Common myeloid progenitor, CD34-positive (primary cell): ENCODE measurements at regions of chr9 and their contacts with region 1.

Region 1: DNA sequence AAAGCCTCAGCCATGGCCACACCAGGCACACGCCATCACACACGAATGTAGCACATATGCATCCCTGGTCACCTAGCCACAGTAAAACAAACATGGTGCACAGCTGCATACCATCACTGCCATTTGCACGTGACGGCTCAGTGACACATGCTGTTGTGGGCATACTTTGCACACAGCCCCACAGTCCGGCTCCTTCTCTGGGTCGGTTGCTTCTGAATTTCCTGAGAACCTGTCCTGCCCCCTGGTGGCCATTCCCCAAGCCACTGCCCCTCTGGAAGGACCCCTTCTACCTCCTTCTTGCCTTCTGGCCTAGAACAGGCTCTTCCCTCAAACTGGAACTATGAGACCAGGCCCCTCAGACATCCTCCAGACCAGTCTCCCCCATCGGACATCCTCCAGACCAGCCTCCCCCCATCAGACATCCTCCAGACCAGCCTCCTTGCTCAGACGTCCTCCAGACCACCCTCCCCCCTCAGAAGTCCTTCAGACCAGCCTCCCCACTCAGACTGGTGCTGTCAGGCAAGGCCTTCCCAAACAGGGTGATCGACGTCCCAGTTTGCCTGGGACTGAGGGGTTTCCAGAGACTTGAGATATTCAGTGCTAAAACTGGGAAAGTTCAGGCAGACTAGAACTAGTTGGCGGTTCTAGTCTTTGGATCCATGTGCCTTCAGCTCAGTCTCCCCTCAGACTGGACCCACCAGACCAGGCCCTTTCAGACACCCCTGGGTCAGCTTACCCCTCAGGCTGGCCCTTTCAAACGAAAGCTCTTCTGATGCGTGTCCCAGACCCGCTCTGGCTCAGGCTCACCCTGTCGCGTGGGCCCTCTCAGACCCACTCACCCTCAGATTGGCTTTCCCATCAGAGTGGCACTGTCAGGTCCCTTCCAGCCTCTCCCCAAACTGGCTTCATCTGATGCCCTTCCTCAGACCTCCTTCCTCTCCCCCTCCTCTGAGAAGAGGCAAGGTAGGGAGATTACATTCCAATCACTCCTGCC is 24.3 kb upstream of the ENHO start:
- DNase-seq: peak; percentile 76 to 87 (median 85)
- H3K4me3 ChIP-seq: no peak overlapping the region
- H3K27ac ChIP-seq: no peak overlapping the region
- H3K4me1 ChIP-seq: no peaks in the 10 kb centered on the region
- H3K27me3 ChIP-seq: peaks cover 0 to 17% (median 4%) of the 10 kb centered on the region in 5 experiments

Region 2: GRCh38 chr9:34437006-34437925 is 109.9 kb before region 1 on chr9:
- CTCF ChIA-PET with region 1: interaction called, 22 read pairs
- POLR2A ChIA-PET with region 1: no interaction called
- DNase-seq: peak; percentile 84 to 93 (median 87)
- H3K4me3 ChIP-seq: no peak overlapping the region
- H3K27ac ChIP-seq: no peak overlapping the region
- H3K4me1 ChIP-seq: peaks cover 0 to 19% (median 13%) of the 10 kb centered on the region in 4 experiments
- H3K27me3 ChIP-seq: no peaks in the 10 kb centered on the region

Region 3: DNA sequence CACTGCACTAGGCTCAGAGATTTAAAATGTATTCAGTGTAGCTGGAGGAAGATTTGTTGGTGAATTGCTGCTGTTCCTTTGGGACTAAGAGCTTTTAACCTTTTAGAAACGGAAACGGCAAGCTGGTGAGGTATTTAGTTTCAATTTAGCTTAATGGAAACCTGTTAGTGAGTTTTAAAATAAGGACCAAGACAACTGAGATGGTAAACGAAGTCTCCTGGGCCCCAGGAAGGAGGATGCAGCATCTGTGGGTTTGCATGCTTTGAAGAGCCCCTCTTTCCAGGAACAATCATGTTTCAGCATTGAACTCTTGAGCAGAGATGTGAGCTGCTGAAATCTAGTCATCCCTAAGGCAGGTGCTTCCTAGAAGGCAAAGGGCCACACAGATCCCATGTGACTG is 72.0 kb before region 1 on chr9:
- CTCF ChIA-PET with region 1: no interaction called
- POLR2A ChIA-PET with region 1: no interaction called
- DNase-seq: no peak
- H3K4me3 ChIP-seq: no peak overlapping the region
- H3K27ac ChIP-seq: no peak overlapping the region
- H3K4me1 ChIP-seq: no peaks in the 10 kb centered on the region
- H3K27me3 ChIP-seq: peaks cover 0 to 13% (median 8%) of the 10 kb centered on the region in 5 experiments

Region 4: GRCh38 chr9:34522971-34523797 is 23.9 kb before region 1 on chr9 and contains the start of gene ENHO:
- CTCF ChIA-PET with region 1: interaction called, 15 read pairs
- POLR2A ChIA-PET with region 1: no interaction called
- DNase-seq: peak; percentile 85 to 93 (median 91)
- H3K4me3 ChIP-seq: peak within 1 kb of the TSS in 5 of 7 experiments; percentile 0 to 65 (median 50)
- H3K27ac ChIP-seq: no peak within 1 kb of the TSS
- H3K4me1 ChIP-seq: peaks cover 0 to 16% (median 13%) of the 10 kb centered on the region in 4 experiments
- H3K27me3 ChIP-seq: peaks cover 5 to 25% (median 12%) of the 10 kb centered on the region in 5 experiments

Region 5: DNA sequence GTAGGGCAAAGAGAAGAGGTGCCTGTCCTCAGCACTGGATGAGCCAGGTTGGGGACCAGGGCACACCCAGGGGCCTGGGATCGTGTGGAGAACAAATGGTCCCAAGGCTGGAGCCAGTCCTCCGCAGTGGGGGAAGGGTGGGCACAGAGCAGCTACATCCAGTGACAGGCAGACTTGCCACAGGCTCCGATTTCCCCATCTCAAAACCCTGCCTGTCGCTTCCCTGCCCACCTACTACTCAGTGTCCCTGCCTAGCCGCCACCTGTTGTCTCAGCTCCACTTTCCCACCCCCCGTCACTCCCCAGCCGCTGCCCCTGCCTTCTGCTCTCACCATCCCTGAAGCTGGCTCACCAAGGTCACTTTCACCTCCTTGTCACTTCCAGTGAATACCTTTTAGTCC is 10.4 kb before region 1 on chr9:
- CTCF ChIA-PET with region 1: interaction called, 15 read pairs
- POLR2A ChIA-PET with region 1: no interaction called
- DNase-seq: no peak
- H3K4me3 ChIP-seq: no peak overlapping the region
- H3K27ac ChIP-seq: no peak overlapping the region
- H3K4me1 ChIP-seq: no peaks in the 10 kb centered on the region
- H3K27me3 ChIP-seq: peaks cover 0 to 16% (median 6%) of the 10 kb centered on the region in 5 experiments

Region 6: GRCh38 chr9:34558919-34559623 is 11.9 kb after region 1 on chr9:
- CTCF ChIA-PET with region 1: interaction called, 10 read pairs
- POLR2A ChIA-PET with region 1: no interaction called
- DNase-seq: no peak
- H3K4me3 ChIP-seq: no peak overlapping the region
- H3K27ac ChIP-seq: no peak overlapping the region
- H3K4me1 ChIP-seq: no peaks in the 10 kb centered on the region
- H3K27me3 ChIP-seq: peaks cover 0 to 59% (median 28%) of the 10 kb centered on the region in 5 experiments

Region 7: DNA sequence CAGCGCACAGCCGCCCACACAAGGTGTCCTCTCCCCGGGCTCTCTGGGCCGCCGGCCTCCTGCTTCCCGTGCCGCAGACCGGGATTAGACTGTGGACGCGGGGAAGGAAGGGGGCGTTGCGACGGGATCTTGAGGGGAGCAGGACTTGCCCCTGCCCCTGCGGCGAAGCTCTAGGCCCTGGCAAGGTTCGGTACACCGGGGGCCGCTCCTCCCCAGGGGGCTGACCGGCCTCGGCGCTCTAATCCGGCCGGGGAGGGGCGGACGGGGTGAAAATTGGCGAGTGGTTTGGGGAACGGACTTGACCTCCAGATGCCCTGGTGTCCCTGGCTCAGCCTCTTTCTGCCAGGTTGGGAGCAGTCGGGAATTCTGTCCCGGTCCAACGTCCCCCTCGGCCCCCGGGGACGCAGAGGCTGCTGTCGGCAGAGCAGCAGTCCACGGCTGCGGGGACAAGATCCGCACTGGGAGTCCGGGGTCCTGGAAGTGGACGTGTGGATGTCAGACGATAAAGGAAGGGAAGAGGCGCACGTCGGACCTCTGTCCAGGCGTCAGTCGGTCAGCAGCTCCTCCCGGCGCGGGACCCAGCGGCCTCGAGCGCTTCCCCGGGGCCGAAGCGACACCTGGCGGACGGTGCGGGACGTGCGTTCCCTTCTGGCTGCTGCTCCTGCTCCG is 44.3 kb after region 1 on chr9:
- CTCF ChIA-PET with region 1: interaction called, 57 read pairs
- POLR2A ChIA-PET with region 1: no interaction called
- DNase-seq: peak; percentile 53 to 72 (median 69)
- H3K4me3 ChIP-seq: peak overlapping the region in 6 of 7 experiments; percentile 9 to 74 (median 60)
- H3K27ac ChIP-seq: no peak overlapping the region
- H3K4me1 ChIP-seq: peaks cover 0 to 47% (median 43%) of the 10 kb centered on the region in 4 experiments
- H3K27me3 ChIP-seq: peaks cover 11 to 92% (median 52%) of the 10 kb centered on the region in 5 experiments

Region 8: GRCh38 chr9:34603610-34604231 is 56.6 kb after region 1 on chr9:
- CTCF ChIA-PET with region 1: interaction called, 52 read pairs
- POLR2A ChIA-PET with region 1: no interaction called
- DNase-seq: peak; percentile 68 to 88 (median 80)
- H3K4me3 ChIP-seq: no peak overlapping the region
- H3K27ac ChIP-seq: no peak overlapping the region
- H3K4me1 ChIP-seq: no peaks in the 10 kb centered on the region
- H3K27me3 ChIP-seq: peaks cover 0 to 14% (median 7%) of the 10 kb centered on the region in 5 experiments